ENCODE measurements at regions of chr11 and their contacts with region 1.

Region 1: GRCh38 chr11:47213985-47214564 is 699 bp upstream of the DDB2 start:
- DNase-seq: peak; percentile 95
- H3K4me3 Mint-ChIP-seq: peak overlapping the region; percentile 87
- H3K27ac Mint-ChIP-seq: peak overlapping the region; percentile 97
- H3K4me1 Mint-ChIP-seq: peaks cover 30% of the 10 kb centered on the region
- H3K27me3 Mint-ChIP-seq: no peaks in the 10 kb centered on the region

Region 2: GRCh38 chr11:47083913-47084312 is 130.2 kb before region 1 on chr11:
- CTCF ChIA-PET with region 1: no interaction called
- intact Hi-C with region 1: no loop called
- DNase-seq: no peak
- H3K4me3 Mint-ChIP-seq: no peak overlapping the region
- H3K27ac Mint-ChIP-seq: no peak overlapping the region
- H3K4me1 Mint-ChIP-seq: peaks cover 6% of the 10 kb centered on the region
- H3K27me3 Mint-ChIP-seq: no peaks in the 10 kb centered on the region

Region 3: DNA sequence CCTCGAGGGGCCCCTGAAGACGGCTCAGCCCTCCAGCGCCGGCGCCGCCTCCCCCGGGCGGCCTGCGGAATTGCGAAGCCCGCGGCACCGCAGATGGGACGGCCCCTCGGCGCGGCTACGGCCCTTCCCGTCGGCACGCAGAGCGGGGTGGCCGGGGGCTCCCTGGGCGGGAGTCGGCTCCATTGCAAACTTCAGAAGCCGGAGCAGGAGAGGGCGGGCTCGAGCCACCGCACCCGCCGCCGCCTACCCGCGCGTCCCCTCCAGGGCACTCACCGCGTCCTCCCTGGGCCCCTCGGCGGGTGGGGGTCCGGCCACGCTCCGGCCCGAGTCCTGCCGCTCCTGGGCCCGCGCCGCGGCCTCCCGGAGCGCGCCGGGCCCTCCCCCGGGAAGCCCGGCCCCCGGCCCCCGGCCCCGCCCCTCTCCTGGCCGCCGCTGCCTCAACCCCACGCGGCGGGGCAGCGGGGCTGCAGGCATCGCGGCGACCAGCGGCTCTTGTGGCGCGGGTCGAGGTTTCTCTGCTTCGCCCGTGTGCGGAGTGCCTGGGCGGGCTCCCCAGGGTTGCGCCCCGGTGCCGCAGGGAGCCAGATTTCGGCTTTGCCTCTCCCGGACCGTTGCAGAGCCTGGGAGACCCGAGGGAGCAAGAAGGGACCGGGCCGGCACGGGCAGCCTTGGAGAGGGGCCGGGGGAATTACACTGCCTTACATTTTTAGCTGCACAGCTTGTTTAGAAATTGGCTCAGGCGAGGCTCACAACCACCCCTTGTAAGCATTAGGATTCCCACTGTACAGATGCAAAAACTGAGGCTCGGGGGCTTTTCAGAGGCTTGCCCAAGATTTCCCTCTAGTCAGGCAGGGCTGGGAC is 27.8 kb before region 1 on chr11 and contains the start of gene PACSIN3:
- CTCF ChIA-PET with region 1: interaction called, 3 read pairs
- intact Hi-C with region 1: loop called (anchors 1 kb)
- DNase-seq: peak; percentile 43
- H3K4me3 Mint-ChIP-seq: peak within 1 kb of the TSS; percentile 70
- H3K27ac Mint-ChIP-seq: no peak within 1 kb of the TSS
- H3K4me1 Mint-ChIP-seq: peaks cover 8% of the 10 kb centered on the region
- H3K27me3 Mint-ChIP-seq: peaks cover 27% of the 10 kb centered on the region
- total RNA-seq, gene PACSIN3: 6.5 to 7.2 TPM

Region 4: GRCh38 chr11:47248664-47249377 is 34.7 kb after region 1 on chr11 and contains the start of gene ACP2:
- CTCF ChIA-PET with region 1: interaction called, 4 read pairs
- intact Hi-C with region 1: loop called (anchors 1 kb)
- DNase-seq: peak; percentile 94
- H3K4me3 Mint-ChIP-seq: peak within 1 kb of the TSS; percentile 99
- H3K27ac Mint-ChIP-seq: peak within 1 kb of the TSS; percentile 97
- H3K4me1 Mint-ChIP-seq: peaks cover 24% of the 10 kb centered on the region
- H3K27me3 Mint-ChIP-seq: no peaks in the 10 kb centered on the region
- total RNA-seq, gene ACP2: 8.0 to 9.3 TPM

Region 5: DNA sequence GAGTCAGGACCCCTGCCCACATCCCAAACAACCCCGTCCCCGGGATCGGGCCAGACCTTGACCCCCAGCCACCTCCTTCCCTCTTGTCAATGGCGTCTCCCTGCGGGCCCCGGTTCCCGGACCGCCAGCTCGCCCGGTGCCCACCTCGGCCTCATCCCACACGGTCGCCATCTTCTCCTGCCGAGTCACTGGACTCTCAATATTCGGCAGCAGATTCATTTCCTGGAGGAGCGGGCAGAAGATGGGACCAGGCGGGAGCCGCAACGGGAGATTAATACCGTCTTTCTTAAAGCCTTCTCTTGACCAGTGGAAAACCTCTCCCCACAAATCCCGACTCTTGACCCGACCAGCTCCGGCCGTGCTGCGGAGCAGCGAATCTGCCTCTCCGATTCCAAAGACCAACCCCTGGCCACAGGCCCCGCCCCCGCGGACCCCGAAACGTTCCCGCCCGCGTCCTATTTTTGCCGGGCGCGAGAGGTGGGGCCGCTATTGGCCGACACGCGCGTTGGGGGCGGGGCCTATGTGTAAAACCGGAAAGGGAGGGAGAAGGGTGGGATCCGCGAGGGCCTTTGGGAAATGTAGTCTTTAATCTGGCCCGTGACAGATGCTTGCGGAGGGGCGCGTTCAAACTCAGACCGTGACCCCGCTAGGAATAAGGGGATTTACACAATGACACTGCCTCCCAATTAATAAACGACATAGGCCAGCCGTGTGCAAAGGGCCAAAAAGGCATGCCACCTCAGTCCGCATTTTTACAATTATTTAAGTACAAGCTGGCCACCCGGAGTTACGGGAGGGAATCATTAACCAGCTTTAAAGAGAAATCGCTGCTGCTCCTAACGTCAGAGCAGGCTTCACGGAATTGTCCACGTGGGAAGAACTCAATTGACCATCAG is 212.2 kb after region 1 on chr11 and contains the start of gene PSMC3:
- CTCF ChIA-PET with region 1: no interaction called
- intact Hi-C with region 1: loop called (anchors 1 kb)
- DNase-seq: peak; percentile 99
- H3K4me3 Mint-ChIP-seq: peak within 1 kb of the TSS; percentile 98
- H3K27ac Mint-ChIP-seq: peak within 1 kb of the TSS; percentile 98
- H3K4me1 Mint-ChIP-seq: peaks cover 26% of the 10 kb centered on the region
- H3K27me3 Mint-ChIP-seq: no peaks in the 10 kb centered on the region
- total RNA-seq, gene PSMC3: 127 to 129 TPM

Region 6: GRCh38 chr11:47731475-47731874 is 517.4 kb after region 1 on chr11:
- CTCF ChIA-PET with region 1: no interaction called
- intact Hi-C with region 1: no loop called
- DNase-seq: no peak
- H3K4me3 Mint-ChIP-seq: no peak overlapping the region
- H3K27ac Mint-ChIP-seq: no peak overlapping the region
- H3K4me1 Mint-ChIP-seq: no peaks in the 10 kb centered on the region
- H3K27me3 Mint-ChIP-seq: no peaks in the 10 kb centered on the region

Region 7: DNA sequence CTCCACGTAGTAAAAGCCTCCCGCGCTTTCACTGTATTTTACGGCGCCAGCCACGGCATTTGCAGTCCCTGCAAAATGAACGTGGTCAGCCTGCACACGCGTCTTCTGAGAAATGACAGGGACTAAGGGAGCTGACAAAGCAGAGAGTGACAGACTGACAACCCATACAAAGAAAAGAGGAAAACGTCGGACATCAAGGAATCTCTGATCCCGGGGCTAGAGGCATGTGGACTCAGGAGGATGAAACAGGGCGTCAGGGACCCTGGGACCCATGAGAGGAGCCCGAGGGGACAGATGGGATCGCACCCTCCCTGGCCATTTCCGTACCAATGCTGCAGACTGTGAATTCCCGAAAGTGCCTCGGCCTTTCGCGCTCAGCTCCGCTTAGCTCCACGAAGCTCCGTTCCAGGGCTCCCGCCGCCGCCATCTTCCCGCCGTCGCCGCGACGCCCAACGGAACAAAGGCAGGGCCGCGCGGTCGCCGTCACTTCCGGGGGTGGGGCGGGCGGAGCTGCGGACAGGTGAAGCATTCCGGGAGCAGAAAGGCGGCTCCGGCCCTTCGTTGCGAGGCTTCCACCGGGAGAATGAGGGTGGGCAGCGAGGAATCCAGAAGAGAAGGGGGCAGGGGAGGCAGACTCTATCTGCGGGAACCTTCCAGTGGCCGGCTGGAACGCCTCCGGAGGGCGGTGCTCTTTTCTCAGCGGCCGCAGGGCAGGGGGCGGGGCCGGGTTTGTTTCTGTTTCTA is 634.0 kb after region 1 on chr11 and contains the start of gene NUP160:
- CTCF ChIA-PET with region 1: no interaction called
- intact Hi-C with region 1: loop called (anchors 2 kb)
- DNase-seq: peak; percentile 92
- H3K4me3 Mint-ChIP-seq: peak within 1 kb of the TSS; percentile 93
- H3K27ac Mint-ChIP-seq: peak within 1 kb of the TSS; percentile 92
- H3K4me1 Mint-ChIP-seq: peaks cover 47% of the 10 kb centered on the region
- H3K27me3 Mint-ChIP-seq: no peaks in the 10 kb centered on the region
- total RNA-seq, gene NUP160: 64.7 to 64.8 TPM

Region 8: DNA sequence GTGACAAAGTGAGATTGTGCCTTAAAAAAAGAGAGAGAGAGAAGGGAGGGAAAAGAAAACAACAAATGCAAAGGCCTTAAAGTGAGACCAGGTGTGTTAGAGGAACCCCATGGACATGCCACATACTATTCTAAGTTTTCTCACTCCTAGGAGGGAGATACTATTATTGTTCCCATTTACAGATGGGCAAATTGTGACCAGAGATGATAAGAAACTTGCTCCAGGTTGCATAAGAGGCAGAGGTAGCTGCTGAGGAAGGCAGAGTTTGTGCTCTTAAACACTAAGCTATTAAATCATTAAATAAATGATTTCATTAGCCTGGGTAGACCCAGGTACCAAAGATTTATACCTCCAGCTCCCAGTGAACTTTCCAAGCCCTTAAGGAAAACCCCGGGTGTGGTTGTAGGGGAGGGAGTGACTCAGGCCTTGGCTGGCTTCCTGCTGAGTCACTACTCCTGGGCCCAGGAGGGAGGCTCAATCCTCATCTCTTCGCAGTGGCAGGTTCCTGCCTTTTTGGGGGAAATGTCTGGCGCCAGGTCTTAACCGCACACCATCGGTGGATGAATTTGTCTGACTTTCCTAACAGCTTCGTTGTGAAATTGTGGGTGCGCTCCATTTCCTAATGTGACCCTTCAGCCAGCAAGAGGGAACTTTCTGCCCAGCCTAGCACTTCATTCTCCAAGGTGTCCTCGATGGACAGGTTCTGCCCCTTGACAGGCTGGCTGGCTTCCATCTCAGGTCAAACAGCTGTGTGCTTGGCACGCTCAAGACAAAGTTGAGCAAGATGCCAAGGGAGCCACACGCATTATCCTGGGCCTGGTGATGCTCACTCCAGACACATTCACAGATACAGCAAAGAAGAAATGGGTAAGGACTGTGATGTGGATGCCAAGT is 732.9 kb after region 1 on chr11:
- CTCF ChIA-PET with region 1: no interaction called
- intact Hi-C with region 1: no loop called
- DNase-seq: peak; percentile 66
- H3K4me3 Mint-ChIP-seq: no peak overlapping the region
- H3K27ac Mint-ChIP-seq: no peak overlapping the region
- H3K4me1 Mint-ChIP-seq: peaks cover 38% of the 10 kb centered on the region
- H3K27me3 Mint-ChIP-seq: no peaks in the 10 kb centered on the region

Measured in activated naive CD4-positive, alpha-beta T cell treated with anti-CD3 and anti-CD28 coated beads for 36 hours (primary cell).